Heart right ventricle (tissue), 16 donors: ENCODE measurements at regions of chr9 and their contacts with region 1.

Region 1: GRCh38 chr9:122797316-122798063 is 2.4 kb upstream of the OR1K1 start:
- DNase-seq: no peak
- ATAC-seq: no peak
- H3K4me3 ChIP-seq: no peak overlapping the region
- H3K27ac ChIP-seq: no peak overlapping the region
- H3K4me1 ChIP-seq: no peaks in the 10 kb centered on the region
- H3K27me3 ChIP-seq: no peaks in the 10 kb centered on the region
- CTCF ChIP-seq: no peak

Region 2: DNA sequence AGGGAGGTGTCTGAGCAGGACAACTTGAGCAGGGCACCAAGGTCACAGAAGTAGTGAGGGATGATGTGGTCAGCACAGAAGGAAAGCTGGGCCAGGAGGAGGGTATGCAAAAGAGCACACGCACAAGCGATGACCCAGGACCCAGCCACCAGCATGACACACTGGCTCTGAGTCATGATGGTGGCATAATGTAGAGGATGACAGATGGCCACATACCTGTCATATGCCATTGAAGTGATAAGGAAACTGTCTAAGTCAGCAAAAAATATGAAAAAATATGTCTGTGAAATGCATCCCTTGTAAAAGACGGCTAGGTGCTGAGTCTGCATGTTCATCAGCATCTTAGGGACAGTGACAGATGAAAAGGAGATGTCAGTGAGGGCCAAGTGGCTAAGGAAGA is 320.1 kb before region 1 on chr9:
- intact Hi-C with region 1: loop called in 1 of 10 experiments (anchors 10 kb)
- DNase-seq: no peak
- ATAC-seq: no peak
- H3K4me3 ChIP-seq: no peak overlapping the region
- H3K27ac ChIP-seq: no peak overlapping the region
- H3K4me1 ChIP-seq: no peaks in the 10 kb centered on the region
- H3K27me3 ChIP-seq: peaks cover 0 to 31% (median 13%) of the 10 kb centered on the region in 7 donors
- CTCF ChIP-seq: no peak